HCT116 (cell line): ENCODE measurements at regions of chrX and their contacts with region 1.

Region 1: DNA sequence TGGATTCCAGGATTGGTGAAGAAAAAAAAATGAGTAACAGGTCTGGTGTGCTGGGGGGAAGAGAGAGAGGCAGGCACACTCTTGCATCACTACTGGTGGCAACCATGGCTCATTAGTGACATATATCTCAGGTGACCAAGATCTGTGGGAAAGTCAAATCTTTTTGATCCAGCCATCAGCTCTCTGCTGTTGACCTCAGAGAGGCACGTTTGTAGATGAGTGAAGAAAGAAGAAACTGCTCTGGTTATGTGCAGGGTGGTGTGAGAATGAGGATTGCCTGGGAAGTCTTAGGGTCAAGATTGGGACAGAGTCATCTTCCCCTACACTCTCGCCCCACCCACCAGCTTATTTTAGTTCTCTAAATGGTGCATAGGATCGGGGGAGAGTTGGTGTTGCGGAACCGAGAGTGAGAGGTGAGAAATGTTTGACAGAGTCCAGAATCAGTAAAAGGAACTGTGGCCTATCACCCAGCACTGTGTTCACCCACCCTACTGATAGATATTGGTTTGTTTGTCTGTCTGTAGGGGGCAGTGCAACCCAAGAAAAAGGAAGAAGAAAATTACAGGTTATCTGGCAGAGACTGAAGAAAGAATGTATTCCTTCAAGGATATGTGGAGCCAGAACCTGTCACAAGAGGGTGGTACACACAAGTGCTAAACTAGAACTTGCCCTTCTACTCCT is 21.9 kb downstream of the ARMCX6 start:
- DNase-seq: peak; percentile 58
- ATAC-seq: peak; percentile 95
- H3K4me3 ChIP-seq: no peak overlapping the region
- H3K27ac ChIP-seq: no peak overlapping the region
- H3K4me1 ChIP-seq: no peaks in the 10 kb centered on the region
- H3K27me3 ChIP-seq: no peaks in the 10 kb centered on the region
- CTCF ChIP-seq: peak; percentile 44 to 92 (median 64); a peak in 5 of 6 replicates
- POLR2A ChIP-seq: no peak
- RAD21 ChIP-seq: peak; percentile 84

Region 2: DNA sequence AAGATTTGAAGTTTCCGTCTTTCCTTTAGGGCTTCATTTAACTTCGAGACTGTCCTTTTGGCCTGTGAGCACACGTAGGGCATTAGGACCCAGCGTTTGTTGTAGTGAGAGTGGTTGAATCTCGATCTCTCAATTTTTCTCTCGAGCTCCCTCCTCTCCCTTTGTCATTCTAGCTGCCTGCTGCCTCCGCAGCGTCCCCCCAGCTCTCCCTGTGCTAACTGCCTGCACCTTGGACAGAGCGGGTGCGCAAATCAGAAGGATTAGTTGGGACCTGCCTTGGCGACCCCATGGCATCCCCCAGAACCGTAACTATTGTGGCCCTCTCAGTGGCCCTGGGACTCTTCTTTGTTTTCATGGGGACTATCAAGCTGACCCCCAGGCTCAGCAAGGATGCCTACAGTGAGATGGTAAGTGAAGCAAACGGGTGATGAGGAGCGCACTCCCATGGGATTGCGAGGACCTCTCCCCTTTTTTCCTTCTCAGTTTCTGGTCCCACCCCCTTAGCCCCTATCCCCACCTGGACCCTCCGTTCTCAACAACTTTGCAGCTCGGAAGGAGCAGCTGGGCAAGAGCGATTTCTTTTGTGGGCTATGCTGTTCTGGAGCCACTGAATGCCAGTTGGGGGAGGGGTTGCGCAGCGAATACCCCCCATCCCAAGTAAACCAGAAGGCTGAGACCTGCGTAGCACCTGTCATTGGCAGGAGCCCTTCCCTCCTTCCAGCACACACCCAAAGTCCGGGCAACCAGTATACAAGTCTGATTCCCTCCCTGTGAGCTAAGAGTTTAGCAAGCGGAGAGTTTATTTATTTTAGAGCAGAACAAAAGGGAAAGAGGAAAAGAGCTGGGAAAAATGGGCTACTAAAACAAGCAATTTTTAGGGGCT is 516.9 kb before region 1 on chrX and contains the start of gene TMEM35A:
- CTCF ChIA-PET with region 1: no interaction called
- POLR2A ChIA-PET with region 1: no interaction called
- RAD21 ChIA-PET with region 1: no interaction called
- intact Hi-C with region 1: no loop called
- DNase-seq: no peak
- ATAC-seq: no peak
- H3K4me3 ChIP-seq: no peak within 1 kb of the TSS
- H3K27ac ChIP-seq: no peak within 1 kb of the TSS
- H3K4me1 ChIP-seq: no peaks in the 10 kb centered on the region
- H3K27me3 ChIP-seq: no peaks in the 10 kb centered on the region
- CTCF ChIP-seq: no peak
- POLR2A ChIP-seq: no peak
- RAD21 ChIP-seq: no peak
- total RNA-seq, gene TMEM35A: not detected

Region 3: GRCh38 chrX:101415180-101416145 is 180.4 kb before region 1 on chrX:
- CTCF ChIA-PET with region 1: no interaction called
- POLR2A ChIA-PET with region 1: no interaction called
- RAD21 ChIA-PET with region 1: no interaction called
- intact Hi-C with region 1: loop called (anchors 5 kb)
- DNase-seq: no peak
- ATAC-seq: peak; percentile 63
- H3K4me3 ChIP-seq: no peak overlapping the region
- H3K27ac ChIP-seq: peak overlapping the region; percentile 40; the same call in 1 of the 2 replicates
- H3K4me1 ChIP-seq: no peaks in the 10 kb centered on the region
- H3K27me3 ChIP-seq: no peaks in the 10 kb centered on the region
- CTCF ChIP-seq: peak; percentile 39 to 72 (median 51); a peak in 5 of 6 replicates
- POLR2A ChIP-seq: no peak
- RAD21 ChIP-seq: peak; percentile 60

Region 4: GRCh38 chrX:101803451-101803850 is 207.6 kb after region 1 on chrX:
- CTCF ChIA-PET with region 1: no interaction called
- POLR2A ChIA-PET with region 1: no interaction called
- RAD21 ChIA-PET with region 1: no interaction called
- intact Hi-C with region 1: loop called (anchors 5 kb)
- DNase-seq: no peak
- ATAC-seq: peak; percentile 35; the same call in 1 of the 2 replicates
- H3K4me3 ChIP-seq: no peak overlapping the region
- H3K27ac ChIP-seq: no peak overlapping the region
- H3K4me1 ChIP-seq: no peaks in the 10 kb centered on the region
- H3K27me3 ChIP-seq: 0 out of 2 replicates have a peak, but pooled peaks cover 13% of the 10 kb centered on the region
- CTCF ChIP-seq: peak; percentile 36 to 59 (median 54); a peak in 5 of 6 replicates
- POLR2A ChIP-seq: no peak
- RAD21 ChIP-seq: peak; percentile 61

Region 5: GRCh38 chrX:102515975-102516941 is 920.4 kb after region 1 on chrX and contains the start of gene TMSB15A:
- CTCF ChIA-PET with region 1: no interaction called
- POLR2A ChIA-PET with region 1: no interaction called
- RAD21 ChIA-PET with region 1: no interaction called
- intact Hi-C with region 1: loop called (anchors 5 kb)
- DNase-seq: no peak
- ATAC-seq: peak; percentile 95
- H3K4me3 ChIP-seq: peak within 1 kb of the TSS; percentile 45 to 52
- H3K27ac ChIP-seq: no peak within 1 kb of the TSS
- H3K4me1 ChIP-seq: peaks cover 0 to 12% of the 10 kb centered on the region in 2 experiments; a peak in 1 of 4 replicates
- H3K27me3 ChIP-seq: no peaks in the 10 kb centered on the region
- CTCF ChIP-seq: no peak
- POLR2A ChIP-seq: no peak
- RAD21 ChIP-seq: no peak
- total RNA-seq, gene TMSB15A: 17.0 TPM

Region 6: GRCh38 chrX:102684772-102685515 is 1089.1 kb after region 1 on chrX:
- CTCF ChIA-PET with region 1: no interaction called
- POLR2A ChIA-PET with region 1: no interaction called
- RAD21 ChIA-PET with region 1: no interaction called
- intact Hi-C with region 1: no loop called
- DNase-seq: no peak
- ATAC-seq: no peak
- H3K4me3 ChIP-seq: no peak overlapping the region
- H3K27ac ChIP-seq: no peak overlapping the region
- H3K4me1 ChIP-seq: no peaks in the 10 kb centered on the region
- H3K27me3 ChIP-seq: no peaks in the 10 kb centered on the region
- CTCF ChIP-seq: no peak
- POLR2A ChIP-seq: no peak
- RAD21 ChIP-seq: no peak